Activated T-helper 1 cell treated with anti-CD3 and anti-CD28 coated beads, Interleukin-12 subunit alpha, Interleukin-12 subunit beta, Interleukin-2, Interleukin-4 antibody, amounts not matched to agents 30 ng/mL and 10 ng/mL and 1 ng/mL, durations not matched to agents 14 hours and 24 hours and 36 hours (primary cell): ENCODE measurements at regions of chr11 and their contacts with region 1.

Region 1: DNA sequence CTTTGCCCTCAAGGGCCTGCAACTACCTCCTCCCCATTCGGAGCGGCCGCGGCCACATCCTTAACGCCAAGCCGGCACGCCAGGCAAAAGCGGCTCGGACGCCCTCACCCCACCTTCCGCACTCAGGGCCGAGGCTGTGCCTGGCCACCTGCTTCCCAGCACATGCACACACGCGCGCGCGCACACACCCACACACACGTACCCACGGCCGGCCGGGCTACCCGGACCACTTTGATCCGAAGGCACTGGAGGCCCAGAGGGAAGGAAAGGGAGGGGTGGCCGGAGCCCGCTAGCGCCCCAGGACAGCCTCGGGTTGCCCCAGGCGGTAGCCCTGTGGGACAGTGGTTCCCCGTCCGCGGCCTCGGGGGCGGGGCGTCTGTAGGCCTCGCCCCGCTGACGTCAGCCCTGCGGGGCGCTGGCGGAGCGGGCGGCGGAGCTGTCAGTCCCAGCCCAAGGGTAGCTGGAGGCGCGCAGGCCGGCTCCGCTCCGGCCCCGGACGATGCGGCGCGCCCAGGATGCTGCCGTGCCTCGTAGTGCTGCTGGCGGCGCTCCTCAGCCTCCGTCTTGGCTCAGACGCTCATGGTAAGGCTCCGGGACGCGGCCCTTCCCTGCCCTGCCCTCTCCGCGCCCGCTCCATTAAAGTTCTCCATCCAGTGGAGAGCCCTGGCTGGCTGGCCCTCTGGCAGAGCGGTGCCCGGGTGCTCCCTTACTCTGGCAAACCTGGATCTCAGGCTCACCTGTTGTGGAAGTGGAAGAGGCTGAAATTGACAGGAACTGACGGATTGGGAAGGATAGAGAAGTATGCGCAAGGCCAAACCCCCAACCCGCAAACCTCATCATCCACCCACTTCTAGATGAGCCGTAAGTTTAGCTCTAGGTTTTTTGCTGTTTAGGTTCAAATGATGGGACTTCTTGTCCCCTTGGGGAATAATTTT is at the start of gene IL10RA:
- DNase-seq: peak; percentile 87
- H3K4me3 Mint-ChIP-seq: peak within 1 kb of the TSS; percentile 89
- H3K27ac Mint-ChIP-seq: peak within 1 kb of the TSS; percentile 92
- H3K4me1 Mint-ChIP-seq: peaks cover 79% of the 10 kb centered on the region
- H3K27me3 Mint-ChIP-seq: no peaks in the 10 kb centered on the region
- total RNA-seq, gene IL10RA: 87.8 and 88.3 TPM in 2 replicates

Region 2: GRCh38 chr11:117232092-117232878 is 753.9 kb before region 1 on chr11 and contains the start of gene RNF214:
- intact Hi-C with region 1: loop called (anchors 5 kb)
- DNase-seq: peak; percentile 73
- H3K4me3 Mint-ChIP-seq: peak within 1 kb of the TSS; percentile 99
- H3K27ac Mint-ChIP-seq: peak within 1 kb of the TSS; percentile 100
- H3K4me1 Mint-ChIP-seq: peaks cover 44% of the 10 kb centered on the region
- H3K27me3 Mint-ChIP-seq: no peaks in the 10 kb centered on the region
- total RNA-seq, gene RNF214: 18.5 and 26.3 TPM in 2 replicates

Region 3: GRCh38 chr11:117663821-117664220 is 322.4 kb before region 1 on chr11:
- intact Hi-C with region 1: no loop called
- DNase-seq: no peak
- H3K4me3 Mint-ChIP-seq: no peak overlapping the region
- H3K27ac Mint-ChIP-seq: no peak overlapping the region
- H3K4me1 Mint-ChIP-seq: no peaks in the 10 kb centered on the region
- H3K27me3 Mint-ChIP-seq: no peaks in the 10 kb centered on the region

Region 4: GRCh38 chr11:117843666-117844484 is 142.3 kb before region 1 on chr11:
- intact Hi-C with region 1: loop called (anchors 1 kb)
- DNase-seq: peak; percentile 63
- H3K4me3 Mint-ChIP-seq: no peak overlapping the region
- H3K27ac Mint-ChIP-seq: no peak overlapping the region
- H3K4me1 Mint-ChIP-seq: no peaks in the 10 kb centered on the region
- H3K27me3 Mint-ChIP-seq: peaks cover 17% of the 10 kb centered on the region

Region 5: GRCh38 chr11:117946842-117947526 is 39.2 kb before region 1 on chr11:
- intact Hi-C with region 1: loop called (anchors 1 kb)
- DNase-seq: peak; percentile 73
- H3K4me3 Mint-ChIP-seq: peak overlapping the region; percentile 27
- H3K27ac Mint-ChIP-seq: peak overlapping the region; percentile 37
- H3K4me1 Mint-ChIP-seq: peaks cover 83% of the 10 kb centered on the region
- H3K27me3 Mint-ChIP-seq: no peaks in the 10 kb centered on the region

Region 6: GRCh38 chr11:118002541-118003423 is 16.6 kb after region 1 on chr11:
- intact Hi-C with region 1: loop called (anchors 1 kb)
- DNase-seq: peak; percentile 50
- H3K4me3 Mint-ChIP-seq: peak overlapping the region; percentile 61
- H3K27ac Mint-ChIP-seq: peak overlapping the region; percentile 98
- H3K4me1 Mint-ChIP-seq: peaks cover 92% of the 10 kb centered on the region
- H3K27me3 Mint-ChIP-seq: no peaks in the 10 kb centered on the region

Region 7: GRCh38 chr11:118051611-118052461 is 65.6 kb after region 1 on chr11:
- intact Hi-C with region 1: loop called (anchors 1 kb)
- DNase-seq: peak; percentile 57
- H3K4me3 Mint-ChIP-seq: peak overlapping the region; percentile 69
- H3K27ac Mint-ChIP-seq: peak overlapping the region; percentile 93
- H3K4me1 Mint-ChIP-seq: peaks cover 64% of the 10 kb centered on the region
- H3K27me3 Mint-ChIP-seq: peaks cover 3% of the 10 kb centered on the region

Region 8: GRCh38 chr11:118304568-118305248 is 318.5 kb after region 1 on chr11 and contains the start of gene CD3E:
- intact Hi-C with region 1: loop called (anchors 5 kb)
- DNase-seq: peak; percentile 60
- H3K4me3 Mint-ChIP-seq: peak within 1 kb of the TSS; percentile 99
- H3K27ac Mint-ChIP-seq: peak within 1 kb of the TSS; percentile 98
- H3K4me1 Mint-ChIP-seq: peaks cover 62% of the 10 kb centered on the region
- H3K27me3 Mint-ChIP-seq: no peaks in the 10 kb centered on the region
- total RNA-seq, gene CD3E: 630 and 646 TPM in 2 replicates